Ascending aorta (tissue), 2 donors: ENCODE measurements at regions of chr2 and their contacts with region 1.

Region 1: DNA sequence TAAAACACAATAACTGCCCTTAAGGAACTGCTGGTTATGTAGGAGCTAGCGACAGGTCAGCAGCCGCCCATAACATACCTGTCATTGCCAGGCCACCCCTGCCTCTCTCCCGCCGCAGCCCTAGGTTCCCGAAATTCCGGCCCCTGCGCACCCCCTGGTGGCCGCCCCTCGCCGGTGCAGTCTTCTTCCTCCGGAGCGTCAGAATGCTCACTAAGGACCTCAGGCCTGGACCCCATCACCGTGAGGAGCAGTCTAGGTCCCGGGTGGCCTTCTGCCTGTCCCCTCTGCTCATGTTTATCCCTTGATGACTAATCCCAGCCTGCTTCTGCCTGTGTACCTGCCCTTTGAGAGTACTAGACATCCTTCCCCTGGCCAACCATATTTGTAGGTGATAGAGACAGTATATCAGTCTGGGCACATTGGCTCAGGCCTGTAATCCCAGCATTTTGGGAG is 115.7 kb upstream of the SLC1A4 start:
- DNase-seq: peak in 1 of 2 donors; percentile 90
- H3K4me3 ChIP-seq: peak overlapping the region; percentile 36 to 53
- H3K27ac ChIP-seq: no peak overlapping the region
- H3K4me1 ChIP-seq: peaks cover 0 to 17% of the 10 kb centered on the region in 2 donors
- H3K27me3 ChIP-seq: no peaks in the 10 kb centered on the region
- CTCF ChIP-seq: peak; percentile 92 to 97 (median 94)

Region 2: DNA sequence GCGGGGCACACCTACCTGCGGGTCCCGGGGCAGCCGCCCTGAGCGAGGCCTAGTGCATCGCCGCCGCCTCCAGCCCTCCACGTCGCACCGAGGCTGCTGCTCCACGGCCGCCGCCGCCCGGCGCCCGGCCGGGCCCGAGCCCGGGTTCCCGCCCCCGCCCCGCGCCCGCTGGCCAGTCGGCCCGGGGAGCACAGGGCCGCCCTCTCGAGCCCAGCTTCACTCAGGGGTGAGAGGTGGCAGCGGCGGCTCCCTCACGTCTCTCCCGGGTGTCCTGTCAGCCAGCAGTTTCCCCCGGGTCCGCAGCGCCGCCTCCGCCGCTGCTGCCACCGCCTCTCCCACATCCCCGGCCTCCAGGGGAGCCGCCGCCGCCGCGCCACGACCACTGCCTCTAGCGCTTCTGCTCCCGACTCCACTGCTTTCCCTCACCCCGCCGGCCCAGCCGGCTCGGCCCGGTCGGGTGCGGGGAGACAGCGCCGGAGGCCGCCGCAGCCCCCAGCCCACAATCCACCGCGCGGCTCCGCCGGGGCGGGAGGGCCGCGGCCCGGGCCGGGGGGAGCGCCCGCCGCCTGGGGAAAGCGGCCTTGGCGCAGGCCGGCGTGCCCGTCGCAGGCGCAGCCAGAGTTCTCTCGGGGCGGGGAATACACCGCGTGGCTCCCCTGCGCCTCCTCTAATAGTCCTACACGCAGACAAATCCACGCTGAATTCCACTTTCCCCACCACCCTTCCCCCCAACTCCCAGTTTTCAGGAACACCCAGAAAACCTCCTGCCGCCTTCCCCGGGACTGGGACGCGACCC is 854.4 kb before region 1 on chr2 and contains the start of gene VPS54:
- intact Hi-C with region 1: loop called (anchors 10 kb)
- DNase-seq: peak; percentile 16 to 80
- H3K4me3 ChIP-seq: peak within 1 kb of the TSS; percentile 83 to 97
- H3K27ac ChIP-seq: peak within 1 kb of the TSS; percentile 95 to 100
- H3K4me1 ChIP-seq: peaks cover 5 to 19% of the 10 kb centered on the region in 2 donors
- H3K27me3 ChIP-seq: no peaks in the 10 kb centered on the region
- CTCF ChIP-seq: peak in 2 of 3 experiments; percentile 15 to 32
- total RNA-seq, gene VPS54: 4.6 TPM